ENCODE measurements at regions of chr2 and their contacts with region 1.

Region 1: DNA sequence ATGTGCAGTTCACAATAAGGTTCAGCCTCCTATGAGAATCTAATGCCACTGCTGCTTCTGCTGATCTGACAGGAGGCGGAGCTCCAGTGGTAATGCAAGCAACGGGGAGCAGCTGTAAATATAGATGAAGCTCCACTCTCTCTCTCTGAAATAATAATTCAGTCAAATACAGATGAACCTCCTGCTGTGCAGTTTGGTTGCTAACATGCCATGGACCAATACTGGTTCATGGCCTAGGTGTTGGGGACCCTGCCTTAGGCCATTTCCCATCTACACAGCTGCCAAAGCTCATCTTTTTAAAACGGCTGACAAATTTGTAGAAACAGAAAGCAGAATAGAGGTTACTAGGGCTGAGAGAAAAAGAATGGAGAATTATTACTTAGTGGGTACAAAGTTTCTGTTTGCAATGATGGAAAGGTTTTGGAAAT is 10.7 kb upstream of the HNRNPA3 start:
- DNase-seq: no peak
- H3K4me3 ChIP-seq: no peak overlapping the region
- H3K27ac ChIP-seq: no peak overlapping the region
- H3K4me1 ChIP-seq: peaks cover 2 to 11% (median 6%) of the 10 kb centered on the region in 4 experiments; a peak in 5 of 7 replicates
- H3K27me3 ChIP-seq: no peaks in the 10 kb centered on the region; a peak in 1 of 7 replicates
- CTCF ChIP-seq: no peak
- EP300 ChIP-seq: no peak
- POLR2A ChIP-seq: no peak
- RAD21 ChIP-seq: no peak

Region 2: GRCh38 chr2:177229448-177230242 is 27.7 kb after region 1 on chr2:
- CTCF ChIA-PET with region 1: interaction called, 33 read pairs
- POLR2A ChIA-PET with region 1: interaction called, 14 read pairs
- DNase-seq: no peak
- H3K4me3 ChIP-seq: no peak overlapping the region
- H3K27ac ChIP-seq: no peak overlapping the region
- H3K4me1 ChIP-seq: no peaks in the 10 kb centered on the region
- H3K27me3 ChIP-seq: no peaks in the 10 kb centered on the region
- CTCF ChIP-seq: no peak
- EP300 ChIP-seq: no peak
- POLR2A ChIP-seq: no peak
- RAD21 ChIP-seq: no peak